Naive thymus-derived CD4-positive, alpha-beta T cell (primary cell): ENCODE measurements at regions of chr10 and their contacts with region 1.

Region 1: DNA sequence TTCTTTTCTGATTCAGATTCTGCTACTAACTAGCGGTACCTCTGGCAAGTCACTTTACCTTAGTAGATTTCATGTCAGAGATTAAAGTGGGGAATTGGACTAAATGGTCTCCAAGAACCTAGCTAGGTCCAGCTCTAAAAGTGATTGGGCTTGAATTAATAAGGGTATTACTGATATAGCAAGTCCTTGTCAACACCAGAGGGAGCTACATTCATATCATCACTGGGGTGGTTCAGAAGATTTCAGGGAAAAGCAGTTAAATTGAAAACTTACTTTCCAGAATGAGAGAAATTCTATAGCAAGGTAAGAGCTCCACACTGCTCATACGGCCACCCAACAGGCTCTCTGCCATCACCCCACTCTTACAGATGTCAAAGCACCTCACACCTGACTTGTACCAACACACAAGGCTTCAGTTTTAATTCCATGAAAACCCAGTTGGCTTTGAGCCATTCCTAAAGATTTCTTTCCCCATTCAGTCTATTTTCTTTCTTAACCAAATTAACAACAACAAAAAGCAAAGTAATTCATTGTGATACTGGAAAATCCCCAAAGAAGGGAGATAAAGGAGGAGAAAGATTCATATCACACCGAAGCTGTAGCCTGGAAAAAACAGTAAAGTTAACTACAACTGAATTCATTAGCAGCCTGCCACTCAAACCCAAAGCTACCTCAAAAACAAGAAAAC is 38.0 kb upstream of the SPOCK2 start:
- DNase-seq: peak in 1 of 9 donors; percentile 16
- ATAC-seq: no peak
- H3K4me3 ChIP-seq: no peak overlapping the region
- H3K4me3 Mint-ChIP-seq: no peak overlapping the region
- H3K27ac ChIP-seq: no peak overlapping the region
- H3K27ac Mint-ChIP-seq: peak overlapping the region in 4 of 9 donors; percentile 5 to 63 (median 18)
- H3K4me1 ChIP-seq: peaks cover 5 to 10% of the 10 kb centered on the region in 2 donors
- H3K4me1 Mint-ChIP-seq: peaks cover 18 to 54% (median 42%) of the 10 kb centered on the region in 7 donors
- H3K27me3 ChIP-seq: no peaks in the 10 kb centered on the region
- H3K27me3 Mint-ChIP-seq: no peaks in the 10 kb centered on the region

Region 2: GRCh38 chr10:72107325-72108003 is 18.9 kb before region 1 on chr10:
- CTCF ChIA-PET with region 1: interaction called, 8 read pairs
- POLR2A ChIA-PET with region 1: interaction called, 14 read pairs
- intact Hi-C with region 1: loop called in 1 of 2 experiments (anchors 2 kb)
- DNase-seq: peak in 7 of 9 donors; percentile 63 to 77 (median 74)
- ATAC-seq: peak; percentile 82
- H3K4me3 ChIP-seq: peak overlapping the region; percentile 10
- H3K4me3 Mint-ChIP-seq: peak overlapping the region; percentile 67 to 85 (median 78)
- H3K27ac ChIP-seq: peak overlapping the region; percentile 72
- H3K27ac Mint-ChIP-seq: peak overlapping the region; percentile 79 to 96 (median 89)
- H3K4me1 ChIP-seq: peaks cover 32 to 84% of the 10 kb centered on the region in 2 donors
- H3K4me1 Mint-ChIP-seq: peaks cover 53 to 96% (median 89%) of the 10 kb centered on the region in 7 donors
- H3K27me3 ChIP-seq: no peaks in the 10 kb centered on the region
- H3K27me3 Mint-ChIP-seq: no peaks in the 10 kb centered on the region

Region 3: GRCh38 chr10:72114706-72115450 is 11.4 kb before region 1 on chr10:
- CTCF ChIA-PET with region 1: interaction called, 10 read pairs
- POLR2A ChIA-PET with region 1: interaction called, 6 read pairs
- intact Hi-C with region 1: no loop called
- DNase-seq: no peak
- ATAC-seq: no peak
- H3K4me3 ChIP-seq: no peak overlapping the region
- H3K4me3 Mint-ChIP-seq: peak overlapping the region in 1 of 10 donors; percentile 16
- H3K27ac ChIP-seq: no peak overlapping the region
- H3K27ac Mint-ChIP-seq: peak overlapping the region in 4 of 9 donors; percentile 13 to 76 (median 35)
- H3K4me1 ChIP-seq: peaks cover 0 to 13% of the 10 kb centered on the region in 2 donors
- H3K4me1 Mint-ChIP-seq: peaks cover 17 to 71% (median 53%) of the 10 kb centered on the region in 7 donors
- H3K27me3 ChIP-seq: no peaks in the 10 kb centered on the region
- H3K27me3 Mint-ChIP-seq: no peaks in the 10 kb centered on the region

Region 4: GRCh38 chr10:72140174-72140573 is 13.8 kb after region 1 on chr10:
- CTCF ChIA-PET with region 1: interaction called, 23 read pairs
- POLR2A ChIA-PET with region 1: interaction called, 4 read pairs
- intact Hi-C with region 1: no loop called
- DNase-seq: no peak
- ATAC-seq: no peak
- H3K4me3 ChIP-seq: no peak overlapping the region
- H3K4me3 Mint-ChIP-seq: no peak overlapping the region
- H3K27ac ChIP-seq: no peak overlapping the region
- H3K27ac Mint-ChIP-seq: peak overlapping the region in 3 of 9 donors; percentile 1 to 33 (median 8)
- H3K4me1 ChIP-seq: peaks cover 0 to 9% of the 10 kb centered on the region in 2 donors
- H3K4me1 Mint-ChIP-seq: peaks cover 11 to 25% (median 18%) of the 10 kb centered on the region in 7 donors
- H3K27me3 ChIP-seq: no peaks in the 10 kb centered on the region
- H3K27me3 Mint-ChIP-seq: no peaks in the 10 kb centered on the region

Region 5: DNA sequence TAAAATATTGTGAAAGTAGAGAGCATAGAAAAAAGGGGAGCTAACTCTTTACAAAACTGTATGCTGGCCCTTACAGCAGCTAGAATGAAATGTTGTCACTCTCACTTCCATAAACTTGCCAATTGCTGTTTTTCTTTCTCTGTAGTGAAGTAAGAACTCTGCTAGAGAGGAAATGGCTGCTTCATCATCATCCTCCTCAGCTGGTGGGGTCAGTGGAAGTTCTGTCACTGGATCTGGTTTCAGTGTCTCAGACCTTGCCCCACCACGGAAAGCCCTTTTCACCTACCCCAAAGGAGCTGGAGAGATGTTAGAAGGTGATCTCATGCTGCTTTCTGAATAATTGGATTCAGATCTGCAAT is 97.4 kb after region 1 on chr10:
- CTCF ChIA-PET with region 1: interaction called, 12 read pairs
- POLR2A ChIA-PET with region 1: interaction called, 4 read pairs
- intact Hi-C with region 1: loop called in 1 of 2 experiments (anchors 2 kb)
- DNase-seq: no peak
- ATAC-seq: peak; percentile 37
- H3K4me3 ChIP-seq: no peak overlapping the region
- H3K4me3 Mint-ChIP-seq: peak overlapping the region in 8 of 10 donors; percentile 43 to 81 (median 56)
- H3K27ac ChIP-seq: peak overlapping the region; percentile 43
- H3K27ac Mint-ChIP-seq: peak overlapping the region; percentile 35 to 89 (median 72)
- H3K4me1 ChIP-seq: peaks cover 9 to 48% of the 10 kb centered on the region in 2 donors
- H3K4me1 Mint-ChIP-seq: peaks cover 43 to 68% (median 57%) of the 10 kb centered on the region in 7 donors
- H3K27me3 ChIP-seq: no peaks in the 10 kb centered on the region
- H3K27me3 Mint-ChIP-seq: no peaks in the 10 kb centered on the region

Region 6: DNA sequence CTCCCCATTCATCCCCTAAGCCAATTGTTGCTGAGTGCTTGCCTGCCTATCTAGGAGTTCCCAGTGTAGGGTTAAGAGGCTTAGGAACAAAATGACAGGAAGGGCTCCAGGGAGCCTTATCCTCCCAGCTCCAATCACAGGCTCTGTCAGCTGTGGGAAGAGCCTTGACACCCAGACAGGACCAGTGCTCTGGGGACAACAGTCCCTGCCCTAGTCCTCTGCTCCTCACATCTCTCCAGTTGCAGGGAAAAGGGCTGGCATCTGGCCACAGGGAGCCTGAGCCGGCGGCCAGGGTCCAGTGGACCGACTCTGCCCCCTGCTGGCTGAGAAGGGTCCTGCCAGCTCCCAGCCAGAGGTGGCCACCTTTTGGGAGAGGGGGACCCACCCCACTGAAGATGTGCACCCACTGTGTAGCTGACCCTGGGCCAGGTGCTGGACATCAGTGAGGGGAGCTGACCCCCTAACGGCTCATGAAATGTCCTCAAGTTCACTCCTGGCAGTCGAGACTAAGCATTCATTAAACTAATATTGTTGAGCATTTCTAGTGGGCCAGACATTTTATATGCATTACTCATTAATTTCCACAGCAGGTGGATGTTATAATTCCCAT is 210.8 kb after region 1 on chr10:
- CTCF ChIA-PET with region 1: interaction called, 53 read pairs
- POLR2A ChIA-PET with region 1: interaction called, 14 read pairs
- intact Hi-C with region 1: loop called (anchors 1 to 2 kb)
- DNase-seq: peak; percentile 34 to 77 (median 56)
- ATAC-seq: peak; percentile 25
- H3K4me3 ChIP-seq: no peak overlapping the region
- H3K4me3 Mint-ChIP-seq: peak overlapping the region in 4 of 10 donors; percentile 12 to 93 (median 30)
- H3K27ac ChIP-seq: peak overlapping the region; percentile 79
- H3K27ac Mint-ChIP-seq: peak overlapping the region; percentile 29 to 99 (median 92)
- H3K4me1 ChIP-seq: peaks cover 52 to 58% of the 10 kb centered on the region in 2 donors
- H3K4me1 Mint-ChIP-seq: peaks cover 31 to 66% (median 55%) of the 10 kb centered on the region in 7 donors
- H3K27me3 ChIP-seq: no peaks in the 10 kb centered on the region
- H3K27me3 Mint-ChIP-seq: no peaks in the 10 kb centered on the region